AG04449 (cell line): ENCODE measurements at regions of chr6 and their contacts with region 1.

Region 1: DNA sequence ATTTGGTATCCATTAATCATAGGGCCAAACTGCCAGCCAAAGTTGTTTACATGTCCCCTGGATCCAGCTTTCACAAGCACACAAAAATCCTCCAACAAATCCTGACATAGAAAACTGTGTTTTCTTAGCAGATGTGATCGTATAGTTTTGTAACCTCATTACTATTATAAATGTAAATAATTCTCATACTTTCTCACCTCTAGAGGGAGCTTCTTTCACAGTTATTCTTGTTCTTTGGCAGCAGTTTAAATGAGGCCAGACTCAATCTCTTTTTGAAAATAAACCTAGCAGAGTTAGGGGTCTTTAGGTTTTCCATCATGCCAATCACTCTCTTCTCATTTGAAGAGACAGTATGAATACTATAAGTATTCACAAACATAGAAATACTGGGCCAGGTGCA is 17.0 kb upstream of the ZNF318 start:
- DNase-seq: no peak
- H3K4me3 ChIP-seq: no peak overlapping the region
- CTCF ChIP-seq: peak; percentile 6

Region 2: GRCh38 chr6:43402820-43403219 is 16.3 kb after region 1 on chr6:
- CTCF ChIA-PET with region 1: interaction called, 10 read pairs
- POLR2A ChIA-PET with region 1: no interaction called
- DNase-seq: no peak
- H3K4me3 ChIP-seq: no peak overlapping the region
- CTCF ChIP-seq: no peak